ENCODE measurements at regions of chrX and their contacts with region 1.

Region 1: DNA sequence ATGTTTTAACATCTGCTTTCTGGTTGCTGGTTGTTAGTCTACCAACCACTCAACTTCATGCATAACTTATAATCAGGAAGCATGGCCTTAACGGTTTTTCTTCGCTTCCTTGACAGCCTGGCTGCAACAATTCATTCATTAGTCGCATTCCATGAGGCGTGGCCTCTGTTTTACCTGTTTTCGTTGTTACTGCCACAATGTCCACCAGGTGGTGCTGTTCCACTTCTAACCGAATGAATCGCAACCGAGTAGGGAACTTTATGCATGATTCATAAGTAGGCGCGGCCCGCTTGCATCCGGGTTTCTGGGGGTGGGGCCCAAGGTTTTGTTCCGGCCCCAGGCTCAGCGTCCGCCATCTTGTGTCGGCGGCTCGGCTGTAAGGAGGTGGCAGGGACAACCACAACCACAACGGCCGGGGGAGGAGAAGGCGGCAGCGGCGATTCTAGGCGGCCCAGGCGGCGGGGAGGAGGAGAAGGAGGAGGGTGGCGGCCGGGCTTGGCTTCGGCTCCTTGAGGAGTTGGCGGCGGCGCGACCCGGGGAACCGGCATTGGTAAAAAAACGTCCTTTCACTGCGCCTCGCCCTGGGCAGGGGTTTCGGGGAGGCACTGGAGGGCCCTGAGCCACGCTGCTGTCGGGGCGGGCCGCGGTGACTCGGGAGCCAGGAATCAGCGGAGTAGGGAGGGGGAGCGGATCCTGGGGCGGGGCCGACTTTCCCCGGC is at the start of gene UBA1:
- DNase-seq: peak; percentile 93
- H3K4me3 Mint-ChIP-seq: peak within 1 kb of the TSS; percentile 90
- H3K27ac Mint-ChIP-seq: peak within 1 kb of the TSS; percentile 93
- H3K4me1 Mint-ChIP-seq: peaks cover 50% of the 10 kb centered on the region
- H3K27me3 Mint-ChIP-seq: no peaks in the 10 kb centered on the region
- total RNA-seq, gene UBA1: 180 to 187 TPM

Region 2: DNA sequence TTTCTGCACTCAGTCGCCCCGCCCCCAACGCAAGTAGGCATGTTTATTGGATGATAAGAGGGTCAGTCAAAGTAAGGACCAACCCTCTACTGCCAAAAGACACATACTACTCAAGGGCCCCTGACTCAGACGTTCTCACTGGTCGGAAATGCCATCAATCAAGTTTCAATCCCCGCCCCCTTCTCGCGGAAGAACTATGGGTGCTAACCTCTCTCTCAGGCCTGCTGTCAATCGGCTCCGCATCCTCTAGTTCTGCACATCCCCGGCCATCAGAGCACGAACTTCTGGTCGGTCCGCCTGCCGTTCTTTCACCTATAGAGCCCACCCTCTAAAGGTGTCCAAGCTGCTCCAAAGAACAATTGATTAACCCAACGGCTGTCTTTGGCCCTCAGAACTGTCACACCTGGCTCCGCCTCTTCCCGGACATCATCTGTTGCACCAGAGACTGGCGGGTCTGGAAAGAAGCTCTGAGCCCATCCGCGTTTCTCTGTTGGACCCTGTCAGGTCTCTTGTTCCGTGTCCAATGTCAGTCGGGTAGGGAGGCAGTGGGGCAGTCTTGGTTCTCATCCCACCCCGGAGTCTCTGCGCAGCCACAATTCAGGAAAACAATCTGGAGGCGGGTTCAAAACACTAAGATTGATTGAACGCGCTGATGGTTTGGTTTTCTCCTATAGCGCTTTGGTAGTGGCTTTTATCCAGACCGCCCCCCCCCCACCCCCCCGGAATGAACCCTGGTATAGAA is 64.3 kb before region 1 on chrX:
- CTCF ChIA-PET with region 1: no interaction called
- POLR2A ChIA-PET with region 1: interaction called, 10 read pairs
- DNase-seq: peak; percentile 91
- H3K4me3 Mint-ChIP-seq: peak overlapping the region; percentile 96
- H3K27ac Mint-ChIP-seq: peak overlapping the region; percentile 93
- H3K4me1 Mint-ChIP-seq: peaks cover 8% of the 10 kb centered on the region
- H3K27me3 Mint-ChIP-seq: no peaks in the 10 kb centered on the region

Region 3: GRCh38 chrX:47217642-47218279 is 24.1 kb after region 1 on chrX:
- CTCF ChIA-PET with region 1: interaction called, 6 read pairs
- POLR2A ChIA-PET with region 1: interaction called, 26 read pairs
- DNase-seq: peak; percentile 95
- H3K4me3 Mint-ChIP-seq: peak overlapping the region; percentile 85
- H3K27ac Mint-ChIP-seq: peak overlapping the region; percentile 97
- H3K4me1 Mint-ChIP-seq: peaks cover 43% of the 10 kb centered on the region
- H3K27me3 Mint-ChIP-seq: no peaks in the 10 kb centered on the region

Region 4: GRCh38 chrX:47233337-47234113 is 39.9 kb after region 1 on chrX:
- CTCF ChIA-PET with region 1: interaction called, 4 read pairs
- POLR2A ChIA-PET with region 1: interaction called, 14 read pairs
- DNase-seq: peak; percentile 93
- H3K4me3 Mint-ChIP-seq: peak overlapping the region; percentile 84
- H3K27ac Mint-ChIP-seq: peak overlapping the region; percentile 98
- H3K4me1 Mint-ChIP-seq: peaks cover 12% of the 10 kb centered on the region
- H3K27me3 Mint-ChIP-seq: no peaks in the 10 kb centered on the region